Calu3 (cell line): ENCODE measurements at regions of chr3 and their contacts with region 1.

Region 1: GRCh38 chr3:66971891-66972551 is 26.1 kb upstream of the KBTBD8 start:
- DNase-seq: peak; percentile 71
- H3K4me3 Mint-ChIP-seq: peak overlapping the region; percentile 60
- H3K27ac Mint-ChIP-seq: no peak overlapping the region
- H3K4me1 Mint-ChIP-seq: no peaks in the 10 kb centered on the region
- H3K27me3 Mint-ChIP-seq: peaks cover 17% of the 10 kb centered on the region
- CTCF ChIP-seq: peak; percentile 47

Region 2: GRCh38 chr3:66898155-66898554 is 73.9 kb before region 1 on chr3:
- CTCF ChIA-PET with region 1: no interaction called
- intact Hi-C with region 1: no loop called
- DNase-seq: no peak
- H3K4me3 Mint-ChIP-seq: no peak overlapping the region
- H3K27ac Mint-ChIP-seq: no peak overlapping the region
- H3K4me1 Mint-ChIP-seq: no peaks in the 10 kb centered on the region
- H3K27me3 Mint-ChIP-seq: peaks cover 22% of the 10 kb centered on the region
- CTCF ChIP-seq: no peak

Region 3: GRCh38 chr3:66938338-66938963 is 33.6 kb before region 1 on chr3:
- CTCF ChIA-PET with region 1: interaction called, 7 read pairs
- intact Hi-C with region 1: loop called (anchors 2 kb)
- DNase-seq: peak; percentile 40
- H3K4me3 Mint-ChIP-seq: no peak overlapping the region
- H3K27ac Mint-ChIP-seq: no peak overlapping the region
- H3K4me1 Mint-ChIP-seq: no peaks in the 10 kb centered on the region
- H3K27me3 Mint-ChIP-seq: no peaks in the 10 kb centered on the region
- CTCF ChIP-seq: peak; percentile 65

Region 4: GRCh38 chr3:67018105-67018788 is 46.2 kb after region 1 on chr3:
- CTCF ChIA-PET with region 1: no interaction called
- intact Hi-C with region 1: loop called (anchors 5 kb)
- DNase-seq: peak; percentile 8
- H3K4me3 Mint-ChIP-seq: no peak overlapping the region
- H3K27ac Mint-ChIP-seq: no peak overlapping the region
- H3K4me1 Mint-ChIP-seq: peaks cover 27% of the 10 kb centered on the region
- H3K27me3 Mint-ChIP-seq: peaks cover 9% of the 10 kb centered on the region
- CTCF ChIP-seq: no peak

Region 5: DNA sequence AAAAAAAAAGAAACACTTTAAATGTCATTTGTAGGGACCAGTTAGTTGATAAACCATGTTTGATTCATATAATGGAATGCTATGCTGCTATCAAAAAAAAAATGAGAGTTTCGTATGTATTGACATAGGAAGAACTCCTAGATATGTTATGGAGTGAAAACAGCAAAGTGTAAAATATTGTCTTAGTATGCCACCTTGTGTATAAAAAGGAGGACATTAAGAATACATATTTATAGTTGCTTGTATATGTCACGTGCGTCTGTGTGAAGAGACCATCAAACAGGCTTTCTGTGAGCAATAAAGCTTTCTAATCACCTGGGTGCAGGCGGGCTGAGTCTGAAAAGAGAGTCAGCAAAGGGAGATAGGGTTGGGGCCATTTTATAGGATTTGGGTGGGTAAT is 65.6 kb after region 1 on chr3:
- CTCF ChIA-PET with region 1: no interaction called
- intact Hi-C with region 1: loop called (anchors 1 kb)
- DNase-seq: no peak
- H3K4me3 Mint-ChIP-seq: no peak overlapping the region
- H3K27ac Mint-ChIP-seq: no peak overlapping the region
- H3K4me1 Mint-ChIP-seq: no peaks in the 10 kb centered on the region
- H3K27me3 Mint-ChIP-seq: no peaks in the 10 kb centered on the region
- CTCF ChIP-seq: no peak

Region 6: GRCh38 chr3:67405193-67405592 is 433.2 kb after region 1 on chr3:
- CTCF ChIA-PET with region 1: no interaction called
- intact Hi-C with region 1: no loop called
- DNase-seq: no peak
- H3K4me3 Mint-ChIP-seq: no peak overlapping the region
- H3K27ac Mint-ChIP-seq: no peak overlapping the region
- H3K4me1 Mint-ChIP-seq: no peaks in the 10 kb centered on the region
- H3K27me3 Mint-ChIP-seq: no peaks in the 10 kb centered on the region
- CTCF ChIP-seq: no peak

Region 7: GRCh38 chr3:68893600-68894239 is 1921.7 kb after region 1 on chr3:
- CTCF ChIA-PET with region 1: interaction called, 3 read pairs
- intact Hi-C with region 1: loop called (anchors 5 kb)
- DNase-seq: peak; percentile 11
- H3K4me3 Mint-ChIP-seq: no peak overlapping the region
- H3K27ac Mint-ChIP-seq: no peak overlapping the region
- H3K4me1 Mint-ChIP-seq: no peaks in the 10 kb centered on the region
- H3K27me3 Mint-ChIP-seq: peaks cover 42% of the 10 kb centered on the region
- CTCF ChIP-seq: peak; percentile 24